GM12878 (cell line): ENCODE measurements at regions of chr19 and their contacts with region 1.

Region 1: GRCh38 chr19:3324321-3324856 is 42.0 kb upstream of the NFIC start:
- DNase-seq: no peak
- ATAC-seq: peak; percentile 90
- H3K4me3 ChIP-seq: no peak overlapping the region
- H3K27ac ChIP-seq: no peak overlapping the region
- H3K4me1 ChIP-seq: no peaks in the 10 kb centered on the region
- H3K27me3 ChIP-seq: no peaks in the 10 kb centered on the region
- CTCF ChIP-seq: peak; percentile 71 to 90 (median 80)
- EP300 ChIP-seq: no peak
- POLR2A ChIP-seq: no peak
- RAD21 ChIP-seq: peak; percentile 39; the same call in 1 of the 2 replicates

Region 2: GRCh38 chr19:3429581-3430080 is 105.2 kb after region 1 on chr19:
- CTCF ChIA-PET with region 1: interaction called, 87 read pairs
- POLR2A ChIA-PET with region 1: no interaction called
- RAD21 ChIA-PET with region 1: interaction called, 15 read pairs
- SMC1A ChIA-PET with region 1: interaction called, 13 read pairs
- in situ Hi-C with region 1: loop called (anchors 5 kb)
- intact Hi-C with region 1: loop called (anchors 1 kb)
- DNase-seq: no peak
- ATAC-seq: peak; percentile 92
- H3K4me3 ChIP-seq: no peak overlapping the region
- H3K27ac ChIP-seq: no peak overlapping the region
- H3K4me1 ChIP-seq: peaks cover 12% of the 10 kb centered on the region
- H3K27me3 ChIP-seq: no peaks in the 10 kb centered on the region
- CTCF ChIP-seq: peak; percentile 89 to 99 (median 89)
- EP300 ChIP-seq: no peak
- POLR2A ChIP-seq: no peak
- RAD21 ChIP-seq: peak; percentile 71

Region 3: GRCh38 chr19:3434712-3435553 is 110.5 kb after region 1 on chr19:
- CTCF ChIA-PET with region 1: interaction called, 87 read pairs
- POLR2A ChIA-PET with region 1: no interaction called
- RAD21 ChIA-PET with region 1: interaction called, 15 read pairs
- SMC1A ChIA-PET with region 1: interaction called, 13 read pairs
- in situ Hi-C with region 1: loop called (anchors 5 kb)
- intact Hi-C with region 1: loop called (anchors 5 kb)
- DNase-seq: peak; percentile 80
- ATAC-seq: peak; percentile 99
- H3K4me3 ChIP-seq: peak overlapping the region; percentile 74
- H3K27ac ChIP-seq: peak overlapping the region; percentile 98
- H3K4me1 ChIP-seq: peaks cover 5% of the 10 kb centered on the region
- H3K27me3 ChIP-seq: no peaks in the 10 kb centered on the region
- CTCF ChIP-seq: no peak
- EP300 ChIP-seq: no peak
- POLR2A ChIP-seq: peak; percentile 92
- RAD21 ChIP-seq: no peak

Region 4: DNA sequence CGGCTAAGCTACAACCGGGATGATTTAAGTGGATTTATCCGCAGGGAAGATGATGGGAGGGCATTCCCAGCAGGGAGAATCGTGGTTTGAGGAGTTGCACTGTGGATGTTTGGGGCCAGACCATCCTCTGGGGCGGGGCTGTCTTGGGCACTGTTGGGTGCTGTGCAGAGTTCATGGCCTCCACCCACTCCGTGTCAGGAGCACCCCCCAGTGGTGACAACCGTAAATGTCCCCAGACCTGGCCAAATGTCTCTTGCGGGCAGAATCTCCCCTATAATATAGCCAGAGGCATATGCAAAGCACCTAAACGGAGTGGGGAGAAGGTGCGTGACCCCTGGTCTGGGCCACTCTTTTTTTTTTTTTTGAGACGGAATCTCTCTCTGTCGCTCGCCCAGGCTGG is 115.7 kb after region 1 on chr19:
- CTCF ChIA-PET with region 1: interaction called, 5 read pairs
- POLR2A ChIA-PET with region 1: no interaction called
- RAD21 ChIA-PET with region 1: no interaction called
- SMC1A ChIA-PET with region 1: interaction called, 3 read pairs
- in situ Hi-C with region 1: no loop called
- intact Hi-C with region 1: loop called (anchors 5 kb)
- DNase-seq: no peak
- ATAC-seq: peak; percentile 71
- H3K4me3 ChIP-seq: no peak overlapping the region
- H3K27ac ChIP-seq: no peak overlapping the region
- H3K4me1 ChIP-seq: no peaks in the 10 kb centered on the region
- H3K27me3 ChIP-seq: no peaks in the 10 kb centered on the region
- CTCF ChIP-seq: peak; percentile 62 to 72 (median 63)
- EP300 ChIP-seq: no peak
- POLR2A ChIP-seq: no peak
- RAD21 ChIP-seq: peak; percentile 60

Region 5: GRCh38 chr19:3471954-3472655 is 147.7 kb after region 1 on chr19:
- CTCF ChIA-PET with region 1: interaction called, 10 read pairs
- POLR2A ChIA-PET with region 1: no interaction called
- RAD21 ChIA-PET with region 1: interaction called, 4 read pairs
- SMC1A ChIA-PET with region 1: interaction called, 4 read pairs
- in situ Hi-C with region 1: loop called (anchors 5 kb)
- intact Hi-C with region 1: loop called (anchors 1 kb)
- DNase-seq: no peak
- ATAC-seq: peak; percentile 66
- H3K4me3 ChIP-seq: no peak overlapping the region
- H3K27ac ChIP-seq: no peak overlapping the region
- H3K4me1 ChIP-seq: no peaks in the 10 kb centered on the region
- H3K27me3 ChIP-seq: no peaks in the 10 kb centered on the region
- CTCF ChIP-seq: peak; percentile 61 to 81 (median 61)
- EP300 ChIP-seq: no peak
- POLR2A ChIP-seq: no peak; the same call in 1 of the 2 replicates
- RAD21 ChIP-seq: peak; percentile 56

Region 6: DNA sequence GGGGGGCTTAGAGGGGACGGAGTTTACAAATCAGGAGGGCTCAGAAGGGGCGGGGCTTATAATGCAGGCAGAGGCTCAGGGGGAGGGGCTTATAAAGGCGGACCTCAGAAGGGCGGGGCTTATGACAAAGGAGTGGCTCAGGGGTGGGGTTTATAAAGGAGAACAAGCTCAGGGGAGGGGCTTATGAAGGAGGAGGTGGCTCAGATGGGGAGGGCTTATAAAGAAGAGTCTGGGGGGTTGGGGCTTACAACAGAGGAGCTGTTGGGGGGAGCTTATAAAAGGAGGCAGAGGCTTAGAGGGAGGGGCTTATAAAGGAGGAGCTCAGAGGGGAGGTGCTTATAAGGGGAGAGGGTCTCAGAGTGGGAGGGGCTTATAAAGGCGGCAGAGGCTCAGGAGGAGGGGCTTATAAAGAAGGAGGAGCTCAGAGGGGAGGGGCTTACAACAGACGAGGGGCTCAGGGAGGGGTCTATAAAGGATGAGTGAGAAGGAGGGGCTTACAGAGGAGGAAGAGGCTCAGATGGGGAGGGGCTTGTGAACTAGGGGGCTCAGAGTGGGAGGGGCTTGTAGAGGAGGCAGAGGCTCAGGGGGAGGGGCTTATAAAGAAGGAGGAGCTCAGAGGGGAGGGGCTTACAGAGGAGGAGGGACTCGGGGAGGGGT is 154.9 kb after region 1 on chr19:
- CTCF ChIA-PET with region 1: interaction called, 38 read pairs
- POLR2A ChIA-PET with region 1: no interaction called
- RAD21 ChIA-PET with region 1: no interaction called
- SMC1A ChIA-PET with region 1: interaction called, 3 read pairs
- in situ Hi-C with region 1: loop called (anchors 5 kb)
- intact Hi-C with region 1: no loop called
- DNase-seq: no peak
- ATAC-seq: peak; percentile 67
- H3K4me3 ChIP-seq: no peak overlapping the region
- H3K27ac ChIP-seq: no peak overlapping the region
- H3K4me1 ChIP-seq: no peaks in the 10 kb centered on the region
- H3K27me3 ChIP-seq: peaks cover 0 to 2% of the 10 kb centered on the region in 2 experiments; a peak in 3 of 4 replicates
- CTCF ChIP-seq: no peak
- EP300 ChIP-seq: no peak
- POLR2A ChIP-seq: no peak
- RAD21 ChIP-seq: no peak